ENCODE measurements at regions of chr1 and their contacts with region 1.

Region 1: DNA sequence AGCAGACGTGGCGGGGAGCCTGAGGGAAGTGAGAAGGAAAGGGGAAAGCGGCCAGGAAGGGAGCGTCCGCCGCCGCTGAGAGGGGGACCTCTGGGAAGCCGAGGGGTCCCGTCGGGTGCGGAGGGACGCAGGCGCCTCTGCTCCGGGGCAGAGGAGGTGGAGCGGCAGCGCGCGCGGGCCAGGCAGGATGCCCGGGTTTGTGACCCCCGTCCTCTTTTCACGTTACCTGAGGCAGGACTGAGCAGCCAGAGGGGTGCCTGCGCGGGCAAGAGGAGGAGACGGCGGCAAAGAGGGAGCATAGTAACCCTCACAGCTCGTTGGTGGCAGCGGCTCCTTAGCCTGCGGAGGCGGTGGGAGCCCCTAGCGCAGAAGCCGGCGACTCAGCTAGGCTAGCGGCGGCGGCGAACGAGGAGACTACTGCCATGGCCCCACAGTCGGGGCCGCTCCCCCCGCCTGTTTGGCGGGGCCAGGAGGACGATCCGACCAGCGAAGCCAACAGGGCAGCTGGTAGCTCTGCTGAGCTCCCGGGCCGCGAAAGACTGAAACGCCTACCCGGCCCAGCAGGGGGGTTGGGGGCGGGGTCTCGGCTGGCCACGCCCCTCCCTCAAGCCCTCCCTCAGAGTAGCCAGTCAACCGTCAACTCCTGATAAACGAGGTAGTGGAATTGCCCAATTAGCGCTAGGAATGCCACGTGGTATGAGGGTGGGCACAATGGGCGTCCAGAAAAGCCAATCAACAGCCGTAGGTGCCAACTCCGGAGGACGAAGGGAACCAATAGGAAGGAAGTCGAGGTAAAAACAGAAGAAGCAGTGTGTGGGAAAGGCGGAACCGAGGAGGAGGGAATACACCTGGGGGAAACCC is at the start of gene TESK2:
- ATAC-seq: peak; percentile 91 to 96 (median 95)
- H3K4me3 ChIP-seq: peak within 1 kb of the TSS; percentile 51 to 65 (median 58)
- H3K27ac ChIP-seq: no peak within 1 kb of the TSS
- H3K4me1 ChIP-seq: peaks cover 3 to 5% of the 10 kb centered on the region in 2 donors
- total RNA-seq, gene TESK2: 1.1 to 17.3 (median 2.0) TPM

Region 2: GRCh38 chr1:45011837-45012638 is 478.8 kb before region 1 on chr1 and contains the start of gene UROD:
- in situ Hi-C with region 1: loop called in 3 of 9 experiments (anchors 25 kb)
- ATAC-seq: peak; percentile 56 to 76 (median 73)
- H3K4me3 ChIP-seq: peak within 1 kb of the TSS; percentile 92 to 100 (median 100)
- H3K27ac ChIP-seq: peak within 1 kb of the TSS; percentile 39 to 51
- H3K4me1 ChIP-seq: peaks cover 14 to 26% of the 10 kb centered on the region in 2 donors
- total RNA-seq, gene UROD: 60.9 to 229 (median 99.3) TPM

Region 3: DNA sequence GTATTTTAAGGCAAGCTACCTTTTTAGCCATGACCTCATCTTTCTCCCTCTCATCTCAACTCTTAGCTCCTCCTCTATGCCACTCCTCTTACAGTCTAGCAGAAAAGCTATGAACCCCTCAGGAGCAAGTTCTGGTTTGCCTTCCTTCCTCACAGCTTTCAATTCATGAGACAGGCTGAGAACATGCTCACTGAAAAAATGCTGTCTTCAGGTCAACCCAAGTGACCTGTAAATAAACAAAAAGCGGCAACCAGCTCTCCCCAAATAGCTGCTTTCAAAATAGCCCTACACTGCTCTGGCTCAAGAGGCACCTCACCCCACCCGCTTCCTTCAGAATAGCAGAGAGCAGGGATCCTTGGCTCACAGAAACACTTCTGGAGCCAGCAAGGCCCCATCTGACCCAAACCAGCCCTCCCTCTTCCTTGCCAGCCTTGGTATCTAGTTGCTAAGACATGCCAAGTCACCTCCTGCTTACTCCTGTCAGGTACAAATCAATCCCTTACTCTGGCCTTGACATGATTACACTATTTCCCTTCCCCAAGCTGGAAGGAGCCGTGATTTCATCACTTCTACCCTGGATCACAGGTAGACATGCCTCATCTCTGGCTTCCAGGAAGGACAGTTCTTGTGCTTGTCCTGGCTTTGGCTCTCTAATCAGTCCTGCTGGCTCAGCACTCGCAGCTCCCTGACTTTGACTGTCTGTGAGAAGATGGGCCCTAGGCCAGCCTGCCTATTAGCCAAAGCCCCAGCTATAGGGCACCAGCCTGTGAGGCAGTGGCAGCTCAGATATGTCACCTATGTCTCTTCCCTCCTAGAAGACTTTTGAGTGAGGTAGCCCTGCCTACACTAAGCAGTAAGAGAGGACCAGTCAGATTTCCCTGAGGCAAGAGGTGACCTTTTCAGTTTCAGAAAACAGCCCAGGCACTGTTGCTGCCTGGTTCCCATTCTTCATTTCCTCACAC is 141.9 kb before region 1 on chr1:
- in situ Hi-C with region 1: loop called in 3 of 9 experiments (anchors 5 to 10 kb)
- ATAC-seq: peak in 3 of 8 experiments; percentile 7 to 59 (median 36)
- H3K4me3 ChIP-seq: no peak overlapping the region
- H3K27ac ChIP-seq: no peak overlapping the region
- H3K4me1 ChIP-seq: no peaks in the 10 kb centered on the region

Region 4: GRCh38 chr1:45359882-45360513 is 130.9 kb before region 1 on chr1:
- in situ Hi-C with region 1: loop called in 2 of 9 experiments (anchors 10 kb)
- ATAC-seq: peak in 6 of 8 experiments; percentile 13 to 39 (median 31)
- H3K4me3 ChIP-seq: no peak overlapping the region
- H3K27ac ChIP-seq: no peak overlapping the region
- H3K4me1 ChIP-seq: peaks cover 11 to 13% of the 10 kb centered on the region in 2 donors

Measured in motor neuron (in vitro differentiated cells).